ENCODE measurements at regions of chr9 and their contacts with region 1.

Region 1: GRCh38 chr9:21789541-21790037 is 12.8 kb upstream of the MTAP start:
- DNase-seq: peak in 1 of 2 donors; percentile 72
- H3K4me3 ChIP-seq: no peak overlapping the region
- CTCF ChIP-seq: peak in 1 of 3 donors; percentile 66
- POLR2A ChIP-seq: no peak

Region 2: GRCh38 chr9:21326526-21327139 is 463.0 kb before region 1 on chr9:
- intact Hi-C with region 1: loop called (anchors 10 kb)
- DNase-seq: no peak
- H3K4me3 ChIP-seq: no peak overlapping the region
- CTCF ChIP-seq: no peak
- POLR2A ChIP-seq: no peak

Region 3: DNA sequence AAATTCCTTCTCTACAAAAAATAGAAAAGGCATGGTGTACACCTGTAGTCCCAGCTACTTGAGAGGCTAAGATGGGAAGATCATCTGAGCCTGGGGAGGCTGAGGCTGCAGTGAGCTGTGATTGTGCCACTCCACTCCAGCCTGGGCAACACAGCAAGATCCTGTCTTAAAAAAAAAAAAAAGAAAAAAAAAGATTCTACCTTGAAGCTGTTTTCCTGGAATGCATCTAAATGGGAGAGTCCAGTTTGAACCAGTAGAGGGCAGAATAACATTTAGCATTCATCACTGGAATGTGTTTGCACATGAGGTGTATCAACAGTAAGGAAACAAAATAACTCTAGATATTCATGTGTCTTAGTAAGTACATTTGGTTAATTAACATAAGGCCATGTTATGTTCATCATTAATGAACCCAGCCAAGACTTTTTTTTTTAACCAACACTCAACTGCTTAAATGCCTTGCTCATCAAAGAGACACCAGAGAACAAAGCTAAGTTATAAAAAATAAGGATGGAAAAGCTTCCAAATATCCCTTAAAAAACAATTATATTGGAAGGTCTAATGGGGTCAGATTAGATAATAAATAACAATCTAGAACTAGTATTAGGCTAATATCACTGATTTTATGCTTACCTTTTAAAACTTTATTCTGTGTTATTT is 323.6 kb before region 1 on chr9:
- intact Hi-C with region 1: loop called (anchors 10 kb)
- DNase-seq: no peak
- H3K4me3 ChIP-seq: no peak overlapping the region
- CTCF ChIP-seq: no peak
- POLR2A ChIP-seq: no peak

Region 4: GRCh38 chr9:21709464-21710058 is 80.0 kb before region 1 on chr9:
- intact Hi-C with region 1: loop called (anchors 5 kb)
- DNase-seq: peak in 1 of 2 donors; percentile 67
- H3K4me3 ChIP-seq: no peak overlapping the region
- CTCF ChIP-seq: peak in 1 of 3 donors; percentile 13
- POLR2A ChIP-seq: no peak